ENCODE measurements at regions of chrX and their contacts with region 1.

Region 1: GRCh38 chrX:39814391-39814790 is 283.4 kb downstream of the BCOR start:
- DNase-seq: no peak
- ATAC-seq: peak; percentile 18

Region 2: DNA sequence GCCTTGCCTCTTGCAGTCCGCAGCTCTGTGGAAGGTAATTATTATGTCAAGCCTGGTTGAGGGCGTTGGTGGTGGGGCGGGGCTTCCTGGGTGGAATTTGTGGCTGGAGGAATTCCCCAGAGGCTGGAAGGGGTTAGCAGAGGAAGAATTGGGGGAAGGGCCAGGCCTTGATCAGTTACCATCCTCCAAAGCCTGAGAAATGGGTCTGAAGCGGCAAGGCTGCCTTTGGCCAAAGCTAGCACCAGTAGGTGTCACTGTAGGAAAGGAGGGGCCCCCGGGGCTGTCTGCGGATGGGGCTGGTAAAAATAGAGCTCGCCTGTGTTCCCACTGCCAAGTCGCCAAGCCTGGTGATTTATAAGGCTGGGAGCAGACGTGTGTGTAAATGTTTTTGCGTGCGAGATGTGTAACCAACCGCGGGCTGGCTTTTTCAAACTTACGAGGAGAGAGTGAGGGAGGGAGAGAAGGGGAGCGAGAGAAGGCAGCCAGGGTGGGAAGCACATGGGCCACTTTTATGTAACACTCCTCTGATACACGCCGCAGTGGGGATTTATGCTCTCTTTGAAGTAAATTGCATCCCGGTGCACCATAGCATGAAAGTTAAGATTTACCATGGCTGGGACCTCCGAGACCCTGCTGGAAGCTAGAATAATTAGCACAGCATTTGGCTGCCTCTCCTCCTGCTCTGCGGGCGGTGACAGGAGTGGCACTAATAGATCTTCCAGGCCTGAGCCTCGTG is 83.6 kb before region 1 on chrX:
- intact Hi-C with region 1: loop called (anchors 5 kb)
- DNase-seq: peak; percentile 70
- ATAC-seq: peak; percentile 82

Region 3: GRCh38 chrX:40097497-40098263 is 283.3 kb after region 1 on chrX and contains the start of gene BCOR:
- intact Hi-C with region 1: loop called (anchors 5 kb)
- DNase-seq: peak; percentile 83
- ATAC-seq: peak; percentile 67
- total RNA-seq, gene BCOR: 16.9 TPM

Region 4: DNA sequence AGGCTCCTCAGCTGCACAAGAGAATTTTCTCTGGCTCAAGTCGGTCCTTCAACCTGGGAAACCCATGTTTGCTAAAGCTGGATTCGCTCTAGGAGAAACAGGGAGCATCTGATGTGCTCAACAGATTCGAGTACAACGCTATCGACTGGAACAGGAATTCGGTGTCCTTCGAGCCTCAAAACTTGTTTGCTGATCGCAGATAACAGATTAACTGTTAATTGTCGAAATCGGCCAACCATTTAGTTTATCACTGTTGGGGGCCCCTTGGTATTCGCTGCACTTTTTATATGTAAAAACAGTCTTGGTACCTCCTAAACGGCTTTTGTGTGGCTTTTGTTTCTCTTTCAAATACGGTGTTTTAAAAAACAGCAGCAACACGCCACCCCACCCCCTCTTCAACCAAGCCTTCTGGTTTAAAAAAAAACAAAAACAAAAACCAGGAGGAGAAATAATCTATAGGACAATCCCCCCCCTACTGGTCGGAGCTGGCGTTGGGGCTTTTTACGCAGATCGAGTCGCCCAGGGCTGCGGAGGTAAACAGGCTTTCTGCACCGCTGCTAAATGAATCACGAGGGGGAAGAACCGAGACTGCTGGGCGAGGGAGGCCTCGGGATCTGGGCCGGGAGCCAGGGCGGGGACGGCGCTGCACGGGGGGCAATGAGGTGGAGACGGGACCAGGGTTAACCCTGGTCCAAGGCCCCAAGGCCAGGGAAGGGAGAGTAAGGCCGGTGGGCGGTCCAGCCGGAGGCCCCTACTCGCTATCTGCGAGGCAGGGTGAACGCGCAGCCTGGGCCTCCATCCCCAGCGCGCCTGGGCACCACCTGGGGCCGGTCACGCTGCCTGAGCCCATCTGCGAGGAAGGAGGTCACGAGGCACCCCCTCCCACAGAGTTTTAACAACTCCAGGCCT is 355.1 kb after region 1 on chrX:
- intact Hi-C with region 1: loop called (anchors 5 kb)
- DNase-seq: no peak
- ATAC-seq: no peak

Region 5: DNA sequence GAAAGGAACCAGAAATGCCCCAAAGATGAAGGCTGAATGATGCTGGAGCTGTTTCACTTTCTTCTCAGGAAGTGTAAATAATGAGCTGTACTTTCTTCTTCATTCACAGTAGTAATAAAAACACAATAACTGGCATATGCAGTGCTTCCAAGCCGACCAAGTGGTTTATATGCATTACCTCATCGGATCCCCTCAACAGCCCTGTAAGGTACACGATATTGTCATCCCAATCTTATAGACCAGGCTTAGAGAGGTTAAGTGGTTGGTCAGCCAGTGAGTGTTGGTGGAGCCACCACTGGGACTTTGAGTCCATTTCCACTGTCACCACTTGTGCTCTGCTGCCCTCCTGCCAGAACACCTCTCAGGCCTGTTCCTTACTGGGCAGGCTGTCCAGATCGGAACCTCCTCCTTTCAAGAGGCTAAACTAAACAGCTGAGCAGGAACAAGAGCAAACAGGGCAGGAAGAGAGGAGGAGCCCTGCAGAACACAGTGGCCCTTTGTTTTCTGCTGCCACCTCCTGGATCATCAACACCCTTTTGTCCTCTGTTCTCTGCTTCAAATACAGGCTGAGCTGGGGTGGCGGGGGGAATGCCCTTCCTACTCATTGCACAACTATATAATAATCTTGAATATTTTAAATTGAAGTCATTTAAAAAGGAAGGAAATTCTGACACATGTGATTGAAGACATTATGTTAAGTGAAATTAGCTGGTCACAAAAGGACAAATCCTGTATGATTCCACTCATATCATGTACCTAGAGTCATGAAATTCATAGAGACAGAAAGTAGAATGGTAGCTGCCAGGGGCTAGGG is 653.8 kb after region 1 on chrX:
- intact Hi-C with region 1: loop called (anchors 5 kb)
- DNase-seq: no peak
- ATAC-seq: peak; percentile 96